OCI-LY7 (cell line): ENCODE measurements at regions of chr17 and their contacts with region 1.

Region 1: GRCh38 chr17:31216053-31216751 is 80.8 kb downstream of the OMG start:
- DNase-seq: peak; percentile 72
- H3K4me3 ChIP-seq: no peak overlapping the region
- H3K27ac ChIP-seq: no peak overlapping the region
- H3K4me1 ChIP-seq: no peaks in the 10 kb centered on the region
- CTCF ChIP-seq: peak; percentile 93

Region 2: GRCh38 chr17:30921544-30922196 is 294.5 kb before region 1 on chr17 and contains the start of gene ADAP2:
- CTCF ChIA-PET with region 1: no interaction called
- POLR2A ChIA-PET with region 1: interaction called, 13 read pairs
- intact Hi-C with region 1: no loop called
- DNase-seq: peak; percentile 27
- H3K4me3 ChIP-seq: peak within 1 kb of the TSS; percentile 41
- H3K27ac ChIP-seq: no peak within 1 kb of the TSS
- H3K4me1 ChIP-seq: peaks cover 7% of the 10 kb centered on the region
- CTCF ChIP-seq: no peak
- total RNA-seq, gene ADAP2: 1.4 TPM in 1 of 2 replicates, not detected in the other

Region 3: DNA sequence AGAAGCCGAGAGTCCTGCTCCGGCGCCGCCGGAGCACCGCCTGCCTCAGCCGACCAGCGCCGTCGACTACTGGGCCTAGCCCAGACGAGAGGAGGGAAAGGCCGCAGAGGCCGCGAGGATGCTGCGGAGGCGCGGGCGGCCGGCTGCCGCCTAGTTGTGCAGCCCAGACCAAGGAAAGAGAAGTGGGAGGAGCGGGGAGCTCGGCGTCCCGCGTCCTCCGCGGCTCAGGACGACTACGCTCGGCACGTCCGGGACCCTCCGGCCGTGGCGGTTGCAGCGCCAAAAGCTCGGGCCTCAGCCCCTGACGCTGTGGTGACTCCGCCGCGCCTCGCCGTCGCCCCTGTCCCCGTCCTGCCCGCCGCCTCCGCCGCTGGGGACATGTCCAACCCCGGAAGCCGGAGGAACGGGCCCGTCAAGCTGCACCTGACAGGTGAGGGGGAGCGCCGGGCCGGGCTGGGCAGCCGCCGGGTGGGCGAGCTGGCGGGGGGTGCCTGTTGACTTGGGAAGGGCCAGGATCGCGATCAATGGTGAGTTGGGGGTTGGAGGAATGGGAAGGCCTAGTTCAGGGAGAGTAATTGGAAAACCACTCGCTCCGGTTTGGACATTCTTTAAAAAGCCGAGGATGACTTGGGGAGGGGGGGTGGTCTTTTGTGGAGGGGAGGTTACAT is 207.7 kb before region 1 on chr17:
- CTCF ChIA-PET with region 1: no interaction called
- POLR2A ChIA-PET with region 1: interaction called, 11 read pairs
- intact Hi-C with region 1: loop called (anchors 1 kb)
- DNase-seq: peak; percentile 6
- H3K4me3 ChIP-seq: peak overlapping the region; percentile 12
- H3K27ac ChIP-seq: no peak overlapping the region
- H3K4me1 ChIP-seq: no peaks in the 10 kb centered on the region
- CTCF ChIP-seq: no peak

Region 4: GRCh38 chr17:31079731-31080130 is 136.5 kb before region 1 on chr17:
- CTCF ChIA-PET with region 1: no interaction called
- POLR2A ChIA-PET with region 1: no interaction called
- intact Hi-C with region 1: no loop called
- DNase-seq: no peak
- H3K4me3 ChIP-seq: no peak overlapping the region
- H3K27ac ChIP-seq: no peak overlapping the region
- H3K4me1 ChIP-seq: no peaks in the 10 kb centered on the region
- CTCF ChIP-seq: no peak

Region 5: DNA sequence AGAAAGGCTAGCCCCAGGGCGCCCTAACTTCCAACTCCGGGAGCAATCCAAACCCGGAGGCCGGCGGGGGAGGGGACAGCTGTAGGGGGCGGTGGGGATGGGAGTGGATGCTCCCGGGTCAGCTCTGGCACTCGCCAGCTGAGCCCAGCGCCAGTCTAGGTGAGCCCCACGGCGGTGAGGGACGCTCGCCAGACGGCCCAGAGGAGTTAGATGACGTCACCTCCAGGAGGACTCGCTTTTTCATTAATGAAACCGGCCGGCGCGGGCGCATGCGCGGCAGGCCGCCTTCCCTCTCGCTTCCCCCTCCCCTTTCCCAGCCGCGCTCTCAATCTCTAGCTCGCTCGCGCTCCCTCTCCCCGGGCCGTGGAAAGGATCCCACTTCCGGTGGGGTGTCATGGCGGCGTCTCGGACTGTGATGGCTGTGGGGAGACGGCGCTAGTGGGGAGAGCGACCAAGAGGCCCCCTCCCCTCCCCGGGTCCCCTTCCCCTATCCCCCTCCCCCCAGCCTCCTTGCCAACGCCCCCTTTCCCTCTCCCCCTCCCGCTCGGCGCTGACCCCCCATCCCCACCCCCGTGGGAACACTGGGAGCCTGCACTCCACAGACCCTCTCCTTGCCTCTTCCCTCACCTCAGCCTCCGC is 121.5 kb before region 1 on chr17 and contains the start of gene NF1:
- CTCF ChIA-PET with region 1: no interaction called
- POLR2A ChIA-PET with region 1: no interaction called
- intact Hi-C with region 1: loop called (anchors 5 kb)
- DNase-seq: peak; percentile 93
- H3K4me3 ChIP-seq: peak within 1 kb of the TSS; percentile 93
- H3K27ac ChIP-seq: peak within 1 kb of the TSS; percentile 9
- H3K4me1 ChIP-seq: peaks cover 14% of the 10 kb centered on the region
- CTCF ChIP-seq: no peak
- total RNA-seq, gene NF1: 24.0 and 38.7 TPM in 2 replicates

Region 6: DNA sequence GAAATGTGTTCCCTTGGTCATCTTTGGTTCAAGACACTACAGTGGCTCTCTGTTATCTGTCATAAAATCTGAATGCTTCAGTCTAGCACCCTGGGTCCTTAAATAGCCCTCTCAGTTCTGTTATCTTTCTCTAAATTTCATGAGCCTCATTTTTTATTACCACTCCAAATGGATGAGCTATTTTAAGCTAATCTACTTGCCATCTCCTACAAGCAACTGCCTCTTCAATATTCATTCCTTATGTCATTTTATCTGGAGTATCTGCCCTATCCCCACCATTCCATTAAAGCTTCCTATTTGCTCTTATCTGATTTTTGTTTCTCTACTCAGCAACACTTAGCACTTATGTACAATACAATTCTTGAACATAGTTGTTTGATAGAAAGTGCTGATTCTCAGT is 133.3 kb after region 1 on chr17:
- CTCF ChIA-PET with region 1: no interaction called
- POLR2A ChIA-PET with region 1: no interaction called
- intact Hi-C with region 1: no loop called
- DNase-seq: no peak
- H3K4me3 ChIP-seq: no peak overlapping the region
- H3K27ac ChIP-seq: no peak overlapping the region
- H3K4me1 ChIP-seq: no peaks in the 10 kb centered on the region
- CTCF ChIP-seq: no peak

Region 7: DNA sequence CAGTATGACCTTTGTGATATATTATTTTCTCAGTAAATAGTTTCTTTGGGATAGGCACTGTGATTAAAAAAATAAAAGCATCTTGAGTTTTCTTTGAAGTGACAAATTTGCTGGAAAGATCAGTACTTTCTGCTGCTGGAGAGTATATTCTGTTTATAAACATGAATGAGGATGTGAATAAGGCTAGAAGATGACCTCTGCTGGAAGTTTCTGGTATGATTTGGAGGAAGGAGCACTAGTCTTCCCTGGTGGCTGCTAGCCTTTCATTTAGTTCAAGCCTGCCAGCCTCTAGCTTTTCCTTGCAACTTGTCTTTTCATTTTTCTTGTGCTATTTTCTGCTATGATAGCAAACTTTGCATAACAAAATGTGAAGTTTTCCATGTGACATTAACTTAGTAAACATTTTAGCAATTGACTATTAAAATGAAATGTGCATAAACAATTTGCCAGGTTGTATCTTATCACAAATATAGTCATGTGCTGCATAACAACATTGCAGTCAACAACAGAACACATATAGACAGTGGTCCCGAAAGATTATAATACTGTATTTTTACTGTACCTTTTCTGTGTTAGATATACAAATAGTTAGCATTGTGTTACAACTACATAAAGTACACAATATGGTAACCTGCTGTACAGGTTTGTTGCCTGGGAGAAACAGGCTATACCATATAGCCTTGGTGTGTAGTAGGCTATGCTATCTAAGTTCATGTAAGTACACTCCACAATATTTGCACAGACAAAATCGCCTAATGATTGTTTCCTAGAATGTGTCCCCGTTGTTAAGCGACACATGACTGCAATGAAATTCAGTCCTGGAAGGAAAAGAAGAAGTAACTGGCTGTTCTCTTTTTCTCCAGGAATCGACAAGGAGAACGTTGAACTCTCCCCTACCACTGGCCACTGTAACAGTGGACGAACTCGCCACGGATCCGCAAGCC is 157.2 kb after region 1 on chr17:
- CTCF ChIA-PET with region 1: no interaction called
- POLR2A ChIA-PET with region 1: interaction called, 6 read pairs
- intact Hi-C with region 1: loop called (anchors 5 kb)
- DNase-seq: peak; percentile 74
- H3K4me3 ChIP-seq: no peak overlapping the region
- H3K27ac ChIP-seq: no peak overlapping the region
- H3K4me1 ChIP-seq: no peaks in the 10 kb centered on the region
- CTCF ChIP-seq: peak; percentile 91

Region 8: GRCh38 chr17:31433091-31433790 is 217.0 kb after region 1 on chr17:
- CTCF ChIA-PET with region 1: no interaction called
- POLR2A ChIA-PET with region 1: no interaction called
- intact Hi-C with region 1: no loop called
- DNase-seq: no peak
- H3K4me3 ChIP-seq: no peak overlapping the region
- H3K27ac ChIP-seq: no peak overlapping the region
- H3K4me1 ChIP-seq: no peaks in the 10 kb centered on the region
- CTCF ChIP-seq: no peak

Region 9: GRCh38 chr17:31448467-31449077 is 232.4 kb after region 1 on chr17:
- CTCF ChIA-PET with region 1: no interaction called
- POLR2A ChIA-PET with region 1: no interaction called
- intact Hi-C with region 1: no loop called
- DNase-seq: no peak
- H3K4me3 ChIP-seq: no peak overlapping the region
- H3K27ac ChIP-seq: no peak overlapping the region
- H3K4me1 ChIP-seq: no peaks in the 10 kb centered on the region
- CTCF ChIP-seq: no peak